Activated naive CD4-positive, alpha-beta T cell treated with anti-CD3 and anti-CD28 coated beads for 36 hours (primary cell): ENCODE measurements at regions of chr9 and their contacts with region 1.

Region 1: GRCh38 chr9:95462249-95463147 is 54.3 kb downstream of the PTCH1 start:
- DNase-seq: peak; percentile 91
- H3K4me3 Mint-ChIP-seq: peak overlapping the region; percentile 73
- H3K27ac Mint-ChIP-seq: no peak overlapping the region
- H3K4me1 Mint-ChIP-seq: peaks cover 30% of the 10 kb centered on the region
- H3K27me3 Mint-ChIP-seq: no peaks in the 10 kb centered on the region

Region 2: GRCh38 chr9:95317119-95317892 is 145.2 kb before region 1 on chr9 and contains the start of gene FANCC:
- CTCF ChIA-PET with region 1: no interaction called
- intact Hi-C with region 1: loop called (anchors 2 kb)
- DNase-seq: peak; percentile 85
- H3K4me3 Mint-ChIP-seq: peak within 1 kb of the TSS; percentile 91
- H3K27ac Mint-ChIP-seq: peak within 1 kb of the TSS; percentile 93
- H3K4me1 Mint-ChIP-seq: peaks cover 18% of the 10 kb centered on the region
- H3K27me3 Mint-ChIP-seq: peaks cover 6% of the 10 kb centered on the region
- total RNA-seq, gene FANCC: 14.1 to 14.5 TPM

Region 3: DNA sequence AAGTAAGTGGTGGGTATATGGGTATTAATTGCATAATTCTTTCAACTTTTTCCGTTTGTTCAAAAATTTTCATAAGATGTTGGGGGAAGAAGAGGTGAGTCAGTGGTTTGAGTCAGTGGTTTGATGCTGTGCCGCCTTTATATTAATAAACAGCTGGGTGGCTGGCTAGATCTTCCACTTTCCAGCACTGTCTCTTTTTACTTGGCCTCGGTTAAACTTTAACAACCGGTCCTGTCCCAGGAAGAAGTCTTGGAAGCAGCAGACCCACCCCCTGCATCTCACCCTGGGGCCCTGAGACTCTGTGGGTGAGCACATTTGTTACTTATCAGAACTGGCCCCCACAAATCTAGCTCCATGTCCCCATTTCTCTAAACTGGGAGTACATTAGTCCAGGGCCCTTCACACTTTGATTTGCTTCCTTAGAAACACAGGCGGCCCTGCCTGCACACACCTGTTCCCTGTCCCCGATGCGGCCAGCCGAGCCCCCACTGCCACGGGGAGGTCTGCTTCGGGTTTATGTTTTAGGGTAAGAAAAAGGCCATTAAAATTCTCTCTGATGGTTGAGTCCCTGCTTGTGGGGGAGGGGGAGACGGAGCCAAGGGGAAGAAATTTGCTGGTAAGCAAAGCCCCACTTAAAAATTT is 36.5 kb before region 1 on chr9:
- CTCF ChIA-PET with region 1: interaction called, 3 read pairs
- intact Hi-C with region 1: loop called (anchors 2 kb)
- DNase-seq: peak; percentile 8
- H3K4me3 Mint-ChIP-seq: peak overlapping the region; percentile 77
- H3K27ac Mint-ChIP-seq: no peak overlapping the region
- H3K4me1 Mint-ChIP-seq: peaks cover 10% of the 10 kb centered on the region
- H3K27me3 Mint-ChIP-seq: no peaks in the 10 kb centered on the region

Region 4: GRCh38 chr9:95494416-95495371 is 32.2 kb after region 1 on chr9:
- CTCF ChIA-PET with region 1: interaction called, 4 read pairs
- intact Hi-C with region 1: loop called (anchors 1 kb)
- DNase-seq: peak; percentile 92
- H3K4me3 Mint-ChIP-seq: peak overlapping the region; percentile 75
- H3K27ac Mint-ChIP-seq: peak overlapping the region; percentile 90
- H3K4me1 Mint-ChIP-seq: peaks cover 49% of the 10 kb centered on the region
- H3K27me3 Mint-ChIP-seq: no peaks in the 10 kb centered on the region

Region 5: DNA sequence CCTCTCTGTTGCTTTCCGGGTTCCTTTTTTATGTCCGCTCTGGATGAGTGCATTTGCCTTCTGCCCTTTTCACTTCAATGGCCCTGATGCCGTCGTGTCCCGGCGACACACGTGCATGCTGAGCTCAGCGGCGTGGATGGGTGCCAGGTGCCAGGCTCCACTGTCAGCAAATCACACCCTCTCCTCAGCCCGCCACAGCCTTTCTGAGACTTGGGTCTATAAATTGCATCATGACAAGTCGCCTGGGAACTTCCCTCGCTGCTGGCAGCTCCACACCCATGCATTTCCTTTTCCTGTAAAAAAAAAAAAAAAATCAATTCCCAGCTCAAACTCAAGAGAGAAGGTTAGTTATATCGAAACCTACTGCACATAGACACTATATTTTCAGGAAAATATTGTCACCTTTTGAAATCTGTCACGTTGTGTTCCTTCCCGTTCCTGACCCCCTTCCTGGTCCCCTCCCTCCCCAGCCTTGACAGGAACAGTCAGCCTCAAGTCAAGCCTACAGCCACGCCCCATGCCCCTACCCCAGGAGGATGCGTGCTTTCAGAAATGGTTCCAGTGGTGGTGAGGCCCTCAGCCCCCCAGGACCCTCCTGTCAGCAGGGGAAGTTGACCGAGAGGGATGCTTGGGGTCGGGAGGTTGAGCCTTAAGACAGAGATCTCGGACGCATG is 164.5 kb after region 1 on chr9:
- CTCF ChIA-PET with region 1: no interaction called
- intact Hi-C with region 1: loop called (anchors 1 kb)
- DNase-seq: peak; percentile 91
- H3K4me3 Mint-ChIP-seq: no peak overlapping the region
- H3K27ac Mint-ChIP-seq: peak overlapping the region; percentile 97
- H3K4me1 Mint-ChIP-seq: peaks cover 31% of the 10 kb centered on the region
- H3K27me3 Mint-ChIP-seq: no peaks in the 10 kb centered on the region